Psoas muscle (tissue), 8 donors: ENCODE measurements at regions of chr19 and their contacts with region 1.

Region 1: DNA sequence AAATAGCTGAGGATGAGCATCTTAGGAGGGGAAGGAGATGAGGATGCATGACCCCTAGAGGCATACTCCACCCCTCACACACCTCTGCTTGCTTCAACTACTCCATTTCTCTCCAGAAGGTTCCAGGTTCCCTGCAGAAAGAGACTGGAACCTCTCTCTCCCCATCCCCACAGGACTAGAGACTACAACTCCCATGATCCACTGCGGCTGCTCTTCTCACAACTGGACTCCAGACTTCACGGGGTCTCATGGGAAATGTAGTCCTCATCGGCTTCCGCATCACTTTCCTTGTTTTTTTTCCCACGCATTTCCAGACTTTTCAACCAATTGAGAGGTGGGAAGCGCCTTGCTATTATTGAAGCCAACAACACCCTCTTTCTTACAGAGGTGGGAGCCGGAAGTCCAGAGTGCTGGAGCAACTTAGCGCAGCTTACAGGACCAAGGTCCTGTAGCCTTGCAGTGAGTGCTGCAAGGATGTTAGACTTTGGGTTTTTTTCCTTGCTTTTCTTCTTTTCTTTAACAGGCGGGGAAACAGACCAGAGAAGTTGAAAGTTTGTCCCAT is 13.9 kb upstream of the CACNG6 start:
- DNase-seq: peak; percentile 73 to 79
- ATAC-seq: peak; percentile 71 to 80 (median 75)
- H3K4me3 ChIP-seq: peak overlapping the region; percentile 56
- H3K27ac ChIP-seq: peak overlapping the region; percentile 49
- H3K4me1 ChIP-seq: peaks cover 9% of the 10 kb centered on the region
- H3K27me3 ChIP-seq: peaks cover 0 to 6% (median 5%) of the 10 kb centered on the region in 3 donors
- CTCF ChIP-seq: no peak

Region 2: DNA sequence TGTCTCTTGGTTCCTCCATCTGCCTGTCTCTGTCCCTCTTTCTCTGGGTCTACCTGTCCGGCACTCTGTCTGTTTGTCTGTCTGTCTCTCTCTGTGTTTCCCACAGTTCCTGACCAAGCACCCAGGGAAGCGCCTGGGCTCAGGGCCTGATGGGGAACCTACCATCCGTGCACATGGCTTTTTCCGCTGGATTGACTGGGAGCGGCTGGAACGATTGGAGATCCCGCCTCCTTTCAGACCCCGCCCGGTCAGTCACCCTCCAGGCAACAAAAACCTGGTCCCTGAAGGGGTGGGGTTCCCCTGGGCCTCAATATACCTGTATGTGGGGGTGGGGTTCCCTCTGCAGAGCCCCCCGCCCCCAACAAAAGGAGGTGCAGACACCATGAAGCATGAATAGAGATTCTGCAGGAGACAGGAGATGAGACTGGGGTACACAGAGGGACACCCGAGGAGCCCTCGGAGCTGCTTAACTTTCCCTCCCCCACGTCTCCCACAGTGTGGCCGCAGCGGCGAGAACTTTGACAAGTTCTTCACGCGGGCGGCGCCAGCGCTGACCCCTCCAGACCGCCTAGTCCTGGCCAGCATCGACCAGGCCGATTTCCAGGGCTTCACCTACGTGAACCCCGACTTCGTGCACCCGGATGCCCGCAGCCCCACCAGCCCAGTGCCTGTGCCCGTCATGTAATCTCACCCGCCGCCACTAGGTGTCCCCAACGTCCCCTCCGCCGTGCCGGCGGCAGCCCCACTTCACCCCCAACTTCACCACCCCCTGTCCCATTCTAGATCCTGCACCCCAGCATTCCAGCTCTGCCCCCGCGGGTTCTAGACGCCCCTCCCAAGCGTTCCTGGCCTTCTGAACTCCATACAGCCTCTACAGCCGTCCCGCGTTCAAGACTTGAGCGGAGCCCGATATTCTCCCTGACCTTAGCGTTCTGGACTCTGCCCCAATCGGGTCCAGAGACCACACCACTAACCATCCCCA is 71.0 kb before region 1 on chr19:
- intact Hi-C with region 1: no loop called
- DNase-seq: peak; percentile 45 to 72
- ATAC-seq: peak; percentile 53 to 81 (median 59)
- H3K4me3 ChIP-seq: peak overlapping the region; percentile 4
- H3K27ac ChIP-seq: no peak overlapping the region
- H3K4me1 ChIP-seq: peaks cover 8% of the 10 kb centered on the region
- H3K27me3 ChIP-seq: peaks cover 0 to 58% (median 35%) of the 10 kb centered on the region in 3 donors
- CTCF ChIP-seq: peak; percentile 84

Region 3: DNA sequence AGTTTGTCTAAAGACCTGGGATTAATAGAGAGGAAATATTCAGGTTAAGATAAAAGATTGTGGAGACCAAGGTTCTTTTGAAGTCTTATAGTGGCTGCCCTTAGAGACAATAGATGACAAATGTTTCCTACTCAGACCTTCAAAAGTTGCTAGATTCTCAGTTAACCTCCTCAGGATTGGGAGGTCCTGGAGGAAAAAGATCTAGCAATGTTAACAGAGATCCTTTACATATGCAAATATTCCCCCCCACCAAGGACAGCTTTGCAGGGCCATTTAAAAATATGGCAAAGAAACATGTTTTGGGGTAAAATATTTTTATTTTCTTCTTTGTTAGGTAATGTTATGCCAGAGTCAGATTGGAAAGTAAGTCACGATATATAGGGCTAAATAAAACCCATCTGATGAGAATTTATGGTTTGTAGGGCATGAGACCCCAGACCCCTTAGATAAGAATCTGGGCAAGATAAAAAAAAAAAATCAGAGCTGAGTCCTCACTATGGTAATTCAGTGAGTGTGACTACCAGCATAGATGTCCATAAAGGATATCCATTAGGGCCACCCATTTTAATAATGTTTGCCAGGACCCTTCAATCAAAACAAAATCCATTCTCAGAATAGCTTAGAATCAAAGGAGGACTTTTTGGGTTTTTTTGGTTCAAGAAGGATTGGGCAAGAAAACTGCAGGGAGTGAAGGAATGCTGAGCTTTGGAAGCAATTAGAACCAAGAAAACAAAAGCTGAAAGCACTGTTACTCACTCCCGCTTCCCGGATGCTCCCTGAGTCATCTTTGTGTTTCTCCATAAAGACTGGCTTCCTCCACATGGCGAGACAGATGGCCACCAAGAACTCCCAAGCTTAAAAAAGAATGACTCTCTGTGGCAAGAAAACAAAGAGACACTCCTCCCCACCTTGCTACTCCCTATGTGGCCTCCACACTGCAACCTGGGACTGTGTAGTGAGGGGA is 58.0 kb after region 1 on chr19:
- intact Hi-C with region 1: no loop called
- DNase-seq: no peak
- ATAC-seq: no peak
- H3K4me3 ChIP-seq: no peak overlapping the region
- H3K27ac ChIP-seq: no peak overlapping the region
- H3K4me1 ChIP-seq: no peaks in the 10 kb centered on the region
- H3K27me3 ChIP-seq: peaks cover 0 to 38% (median 0%) of the 10 kb centered on the region in 3 donors
- CTCF ChIP-seq: no peak

Region 4: DNA sequence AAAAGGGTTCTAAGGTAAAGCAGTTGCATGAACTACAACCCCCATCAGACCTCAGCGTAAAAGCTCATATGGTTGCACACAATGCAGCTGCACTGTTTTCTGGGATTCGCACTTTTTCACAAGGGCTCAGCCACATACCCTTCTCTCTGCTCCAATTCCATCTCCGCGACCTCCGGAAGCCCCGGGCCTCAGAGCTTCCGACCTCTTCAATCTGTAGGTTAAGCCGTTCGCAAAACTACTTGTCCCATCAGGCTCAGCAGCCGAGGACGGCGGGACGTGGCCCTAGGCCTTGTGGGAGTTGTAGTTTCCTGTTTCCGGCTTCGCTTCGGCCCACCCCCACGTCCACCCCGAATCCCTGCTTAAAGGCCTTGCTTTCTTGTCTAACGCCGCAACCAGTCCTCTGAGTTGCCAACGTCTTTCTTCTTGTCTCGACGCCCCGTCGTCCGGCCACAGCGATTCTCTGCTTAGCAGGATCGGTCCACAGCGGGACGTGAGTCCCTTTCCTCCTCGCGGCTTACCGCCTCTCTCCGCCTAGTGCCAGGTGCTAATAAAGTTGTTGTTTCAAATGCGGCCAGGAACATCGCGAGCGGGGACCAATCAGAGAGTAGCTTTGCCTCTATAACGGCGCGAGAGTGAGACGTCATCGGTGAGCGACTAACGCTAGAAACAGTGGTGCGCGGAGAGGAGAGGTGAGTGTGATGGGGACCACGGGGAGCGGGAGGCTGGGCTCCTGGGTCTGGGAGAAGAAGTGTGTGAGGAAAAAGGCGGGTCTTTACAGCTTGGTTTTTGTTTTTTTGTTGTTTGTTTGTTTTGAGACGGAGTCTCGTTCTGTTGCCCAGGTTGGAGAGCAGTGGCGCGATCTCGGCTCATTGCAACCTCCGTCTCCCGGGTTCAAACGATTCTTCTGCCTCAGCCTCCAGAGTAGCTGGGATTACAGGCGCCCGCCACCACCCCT is 137.9 kb after region 1 on chr19 and contains the starts of genes PRPF31 and TFPT:
- intact Hi-C with region 1: loop called in 1 of 2 experiments (anchors 10 kb)
- DNase-seq: peak; percentile 97 to 98
- ATAC-seq: peak; percentile 92 to 96 (median 94)
- H3K4me3 ChIP-seq: peak within 1 kb of the TSS; percentile 86
- H3K27ac ChIP-seq: peak within 1 kb of the TSS; percentile 93
- H3K4me1 ChIP-seq: peaks cover 17% of the 10 kb centered on the region
- H3K27me3 ChIP-seq: no peaks in the 10 kb centered on the region
- CTCF ChIP-seq: no peak
- total RNA-seq, gene PRPF31: 32.3 to 41.6 (median 36.4) TPM
- total RNA-seq, gene TFPT: 11.0 to 22.9 (median 13.8) TPM